ENCODE measurements at regions of chr16 and their contacts with region 1.

Region 1: DNA sequence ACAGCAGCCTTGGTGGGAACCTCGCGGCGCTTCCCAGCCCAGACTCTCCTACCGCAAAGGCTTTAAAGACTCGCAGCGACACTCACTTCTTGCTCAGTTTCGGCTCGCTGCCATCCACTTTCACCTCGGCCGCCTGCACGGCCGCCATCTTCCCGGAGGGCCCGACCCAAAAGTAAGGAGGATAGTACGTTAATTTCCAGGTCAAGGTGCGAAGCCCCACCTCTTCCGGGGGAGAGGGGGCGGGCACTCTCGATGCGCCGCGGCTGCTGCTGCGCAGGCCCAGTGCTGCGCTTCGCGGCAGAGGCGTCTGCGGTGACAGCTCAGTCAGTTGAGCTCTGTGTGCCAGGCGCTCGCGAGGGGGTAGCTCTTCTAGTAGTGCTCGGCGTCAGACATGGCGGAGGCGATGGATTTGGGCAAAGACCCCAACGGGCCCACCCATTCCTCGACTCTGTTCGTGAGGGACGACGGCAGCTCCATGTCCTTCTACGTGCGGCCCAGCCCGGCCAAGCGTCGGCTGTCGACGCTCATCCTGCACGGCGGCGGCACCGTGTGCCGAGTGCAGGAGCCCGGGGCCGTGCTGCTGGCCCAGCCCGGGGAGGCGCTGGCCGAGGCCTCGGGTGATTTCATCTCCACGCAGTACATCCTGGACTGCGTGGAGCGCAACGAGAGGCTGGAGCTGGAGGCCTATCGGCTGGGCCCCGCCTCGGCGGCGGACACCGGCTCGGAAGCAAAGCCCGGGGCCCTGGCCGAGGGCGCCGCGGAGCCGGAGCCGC is at the starts of genes KARS1 and TERF2IP:
- DNase-seq: peak; percentile 92 to 97 (median 95)
- H3K4me3 ChIP-seq: peak within 1 kb of the TSS; percentile 81
- H3K4me3 Mint-ChIP-seq: peak within 1 kb of the TSS; percentile 95 to 100 (median 99)
- H3K27ac ChIP-seq: peak within 1 kb of the TSS; percentile 97
- H3K27ac Mint-ChIP-seq: peak within 1 kb of the TSS; percentile 97 to 100 (median 99)
- H3K4me1 ChIP-seq: peaks cover 53% of the 10 kb centered on the region
- H3K4me1 Mint-ChIP-seq: peaks cover 61 to 73% (median 69%) of the 10 kb centered on the region in 3 donors
- H3K27me3 ChIP-seq: no peaks in the 10 kb centered on the region
- H3K27me3 Mint-ChIP-seq: peaks cover 0 to 2% of the 10 kb centered on the region in 2 donors
- total RNA-seq, gene KARS1: 291 to 307 TPM
- total RNA-seq, gene TERF2IP: 90.6 to 91.0 TPM

Region 2: GRCh38 chr16:75432828-75433731 is 214.6 kb before region 1 on chr16 and contains the start of gene CFDP1:
- CTCF ChIA-PET with region 1: interaction called, 10 read pairs
- POLR2A ChIA-PET with region 1: interaction called, 20 read pairs
- DNase-seq: peak; percentile 94 to 98 (median 96)
- H3K4me3 ChIP-seq: peak within 1 kb of the TSS; percentile 93
- H3K4me3 Mint-ChIP-seq: peak within 1 kb of the TSS; percentile 86 to 95 (median 93)
- H3K27ac ChIP-seq: peak within 1 kb of the TSS; percentile 98
- H3K27ac Mint-ChIP-seq: peak within 1 kb of the TSS; percentile 94 to 99 (median 97)
- H3K4me1 ChIP-seq: peaks cover 12% of the 10 kb centered on the region
- H3K4me1 Mint-ChIP-seq: peaks cover 25 to 46% (median 39%) of the 10 kb centered on the region in 3 donors
- H3K27me3 ChIP-seq: no peaks in the 10 kb centered on the region
- H3K27me3 Mint-ChIP-seq: peaks cover 0 to 2% of the 10 kb centered on the region in 2 donors
- total RNA-seq, gene CFDP1: 34.2 to 39.1 TPM

Region 3: DNA sequence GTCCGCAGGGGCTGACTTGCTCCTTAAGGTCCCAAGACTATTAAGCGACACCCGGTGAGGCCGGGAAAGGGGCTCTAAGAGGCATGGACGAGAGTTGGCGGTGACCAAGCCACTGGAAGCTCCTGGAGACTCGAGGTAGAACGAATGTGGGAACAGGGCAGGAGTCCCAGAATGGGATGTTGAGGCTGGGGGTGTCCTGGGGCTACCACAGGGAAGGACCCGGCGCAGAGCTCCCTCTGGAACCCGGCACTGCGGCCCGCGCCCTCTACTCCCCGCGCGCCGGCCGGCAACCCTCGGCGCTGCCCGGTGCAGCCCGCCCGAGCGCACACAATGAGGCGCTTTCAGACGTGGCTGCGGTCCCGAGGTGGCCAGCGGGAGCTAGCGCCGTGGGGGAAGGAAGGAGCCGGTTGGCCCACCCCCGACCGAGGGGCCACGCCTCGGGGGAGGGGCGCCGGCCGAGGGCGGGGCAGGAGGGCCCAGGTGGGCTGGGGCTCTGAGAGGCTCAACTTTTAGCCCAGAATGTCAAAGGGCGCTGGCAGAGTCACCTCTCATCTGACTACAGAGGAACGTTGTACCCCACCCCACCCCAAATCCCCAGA is 152.5 kb before region 1 on chr16 and contains the start of gene CHST6:
- CTCF ChIA-PET with region 1: no interaction called
- POLR2A ChIA-PET with region 1: no interaction called
- DNase-seq: peak in 1 of 5 donors; percentile 6
- H3K4me3 ChIP-seq: no peak within 1 kb of the TSS
- H3K4me3 Mint-ChIP-seq: peak within 1 kb of the TSS in 6 of 7 donors; percentile 62 to 73 (median 70)
- H3K27ac ChIP-seq: no peak within 1 kb of the TSS
- H3K27ac Mint-ChIP-seq: peak within 1 kb of the TSS in 1 of 8 donors; percentile 53
- H3K4me1 ChIP-seq: peaks cover 6% of the 10 kb centered on the region
- H3K4me1 Mint-ChIP-seq: peaks cover 7 to 9% (median 8%) of the 10 kb centered on the region in 3 donors
- H3K27me3 ChIP-seq: peaks cover 11% of the 10 kb centered on the region
- H3K27me3 Mint-ChIP-seq: peaks cover 18 to 28% of the 10 kb centered on the region in 2 donors
- total RNA-seq, gene CHST6: 0.04 to 0.11 TPM

Region 4: DNA sequence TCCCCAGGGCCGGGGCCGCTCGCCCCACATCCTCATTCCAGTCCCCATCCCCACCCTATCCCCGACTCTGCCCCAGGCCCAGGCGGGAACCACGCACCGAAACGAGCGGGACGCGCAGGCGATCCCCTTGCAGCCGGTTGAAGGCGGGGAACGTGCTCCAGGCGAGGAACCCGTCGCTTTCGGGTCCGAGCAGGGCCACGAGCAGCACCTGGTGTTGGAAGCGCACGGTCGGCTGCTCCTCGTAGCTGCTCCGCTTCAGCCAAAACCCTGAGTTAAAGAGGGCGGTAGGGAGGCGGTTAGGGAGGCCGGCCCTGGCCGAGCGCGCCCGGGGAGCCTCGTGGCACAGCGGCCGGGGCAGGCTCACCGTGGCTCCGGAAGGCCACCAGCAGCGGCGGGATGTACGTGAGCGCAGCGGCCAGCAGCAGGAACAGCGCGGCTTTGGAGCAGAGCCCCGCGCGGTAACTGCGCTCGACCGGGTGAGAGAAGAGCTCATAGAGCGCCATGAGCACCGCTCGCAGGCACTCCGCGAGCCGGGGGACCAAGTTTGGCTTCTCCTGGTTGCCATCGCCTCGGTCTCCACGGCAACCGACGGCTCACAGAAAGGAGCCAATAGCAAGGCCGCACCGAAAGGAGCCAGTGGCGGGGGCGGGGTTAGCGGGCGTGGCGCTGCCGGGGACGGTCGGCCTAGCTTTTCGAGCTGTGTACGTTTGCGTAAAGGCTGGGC is 91.8 kb before region 1 on chr16 and contains the start of gene TMEM231:
- CTCF ChIA-PET with region 1: interaction called, 8 read pairs
- POLR2A ChIA-PET with region 1: interaction called, 18 read pairs
- DNase-seq: peak; percentile 94 to 98 (median 96)
- H3K4me3 ChIP-seq: peak within 1 kb of the TSS; percentile 89
- H3K4me3 Mint-ChIP-seq: peak within 1 kb of the TSS; percentile 77 to 95 (median 87)
- H3K27ac ChIP-seq: peak within 1 kb of the TSS; percentile 58
- H3K27ac Mint-ChIP-seq: peak within 1 kb of the TSS; percentile 89 to 98 (median 94)
- H3K4me1 ChIP-seq: peaks cover 13% of the 10 kb centered on the region
- H3K4me1 Mint-ChIP-seq: peaks cover 7 to 17% (median 10%) of the 10 kb centered on the region in 3 donors
- H3K27me3 ChIP-seq: no peaks in the 10 kb centered on the region
- H3K27me3 Mint-ChIP-seq: no peaks in the 10 kb centered on the region
- total RNA-seq, gene TMEM231: 5.3 to 5.4 TPM

Region 5: DNA sequence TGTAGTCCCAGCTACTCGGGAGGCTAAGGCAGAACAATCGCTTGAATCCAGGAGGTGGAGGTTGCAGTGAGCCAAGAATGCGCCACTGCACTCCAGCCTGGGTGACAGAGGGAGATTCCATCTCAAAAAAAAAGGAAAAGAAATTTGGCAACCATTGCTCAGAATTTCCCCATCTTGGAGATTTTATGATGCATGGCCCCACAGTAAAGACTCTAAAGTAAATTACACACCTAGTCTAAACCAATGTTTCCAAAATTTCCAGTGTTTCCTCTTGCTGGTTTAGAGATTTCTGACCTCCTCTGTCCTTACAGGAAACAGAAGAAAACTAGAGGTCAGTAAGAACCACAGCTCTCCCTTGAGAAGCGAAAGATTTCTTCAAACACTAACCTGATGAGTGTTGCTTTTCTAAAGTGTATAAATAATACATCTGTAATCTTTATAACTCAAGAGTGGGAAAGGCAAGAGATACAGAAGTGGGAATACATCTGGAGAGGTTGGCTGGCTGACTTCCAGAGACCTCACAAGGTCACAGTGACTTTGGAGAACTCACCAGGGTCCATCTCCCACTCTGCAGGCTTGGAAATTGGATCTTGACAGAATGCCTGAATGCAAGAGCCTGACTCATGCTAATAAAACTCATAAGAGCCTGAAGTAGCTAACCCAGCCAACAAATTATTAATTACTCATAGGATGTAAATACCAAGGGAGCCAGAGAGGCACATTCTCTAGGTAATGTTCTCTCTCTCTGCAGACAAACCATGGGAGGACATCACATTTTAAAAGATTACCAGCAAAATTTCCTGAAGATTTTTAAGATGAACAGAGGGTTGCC is 33.4 kb before region 1 on chr16:
- CTCF ChIA-PET with region 1: interaction called, 13 read pairs
- POLR2A ChIA-PET with region 1: interaction called, 148 read pairs
- DNase-seq: no peak
- H3K4me3 ChIP-seq: no peak overlapping the region
- H3K4me3 Mint-ChIP-seq: peak overlapping the region in 4 of 7 donors; percentile 11 to 36 (median 14)
- H3K27ac ChIP-seq: peak overlapping the region; percentile 6
- H3K27ac Mint-ChIP-seq: peak overlapping the region; percentile 23 to 97 (median 72)
- H3K4me1 ChIP-seq: peaks cover 45% of the 10 kb centered on the region
- H3K4me1 Mint-ChIP-seq: peaks cover 45 to 75% (median 61%) of the 10 kb centered on the region in 3 donors
- H3K27me3 ChIP-seq: no peaks in the 10 kb centered on the region
- H3K27me3 Mint-ChIP-seq: peaks cover 0 to 2% of the 10 kb centered on the region in 2 donors

Region 6: GRCh38 chr16:75632857-75633256 is 14.8 kb before region 1 on chr16:
- CTCF ChIA-PET with region 1: interaction called, 17 read pairs
- POLR2A ChIA-PET with region 1: interaction called, 4 read pairs
- DNase-seq: no peak
- H3K4me3 ChIP-seq: no peak overlapping the region
- H3K4me3 Mint-ChIP-seq: peak overlapping the region in 1 of 7 donors; percentile 34
- H3K27ac ChIP-seq: no peak overlapping the region
- H3K27ac Mint-ChIP-seq: peak overlapping the region in 1 of 8 donors; percentile 80
- H3K4me1 ChIP-seq: peaks cover 10% of the 10 kb centered on the region
- H3K4me1 Mint-ChIP-seq: peaks cover 14 to 24% (median 15%) of the 10 kb centered on the region in 3 donors
- H3K27me3 ChIP-seq: no peaks in the 10 kb centered on the region
- H3K27me3 Mint-ChIP-seq: no peaks in the 10 kb centered on the region

Region 7: DNA sequence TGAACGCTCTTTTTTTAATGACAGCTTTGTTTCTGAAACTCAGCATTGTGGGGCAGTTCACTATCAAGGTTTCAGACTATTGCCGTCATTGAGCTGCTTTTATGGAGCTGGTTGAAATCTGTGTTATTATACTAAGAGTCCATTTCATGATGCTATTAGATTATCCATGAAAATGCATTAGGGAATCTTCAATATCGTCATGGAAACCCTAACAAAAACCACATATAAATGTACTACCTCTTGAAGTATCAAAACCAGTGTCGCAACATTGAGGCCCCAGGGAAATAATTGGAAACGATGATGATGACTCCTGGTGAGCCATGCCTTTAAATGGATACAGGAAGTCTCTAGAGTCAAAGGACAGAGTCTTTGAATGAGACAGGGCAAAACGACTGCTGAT is 310.2 kb after region 1 on chr16:
- CTCF ChIA-PET with region 1: no interaction called
- POLR2A ChIA-PET with region 1: no interaction called
- DNase-seq: no peak
- H3K4me3 ChIP-seq: no peak overlapping the region
- H3K4me3 Mint-ChIP-seq: no peak overlapping the region
- H3K27ac ChIP-seq: no peak overlapping the region
- H3K27ac Mint-ChIP-seq: no peak overlapping the region
- H3K4me1 ChIP-seq: no peaks in the 10 kb centered on the region
- H3K4me1 Mint-ChIP-seq: no peaks in the 10 kb centered on the region
- H3K27me3 ChIP-seq: no peaks in the 10 kb centered on the region
- H3K27me3 Mint-ChIP-seq: peaks cover 0 to 2% of the 10 kb centered on the region in 2 donors

Measured in CD8-positive, alpha-beta memory T cell (primary cell).